GM12878 (cell line): ENCODE measurements at regions of chr11 and their contacts with region 1.

Region 1: GRCh38 chr11:33065445-33066178 is 26.2 kb downstream of the TCP11L1 start:
- DNase-seq: no peak
- ATAC-seq: peak; percentile 84
- H3K4me3 ChIP-seq: no peak overlapping the region
- H3K27ac ChIP-seq: no peak overlapping the region
- H3K4me1 ChIP-seq: peaks cover 40% of the 10 kb centered on the region
- H3K27me3 ChIP-seq: no peaks in the 10 kb centered on the region
- CTCF ChIP-seq: peak; percentile 88 to 94 (median 91); a peak in 5 of 6 replicates
- EP300 ChIP-seq: no peak
- POLR2A ChIP-seq: no peak
- RAD21 ChIP-seq: peak; percentile 87

Region 2: GRCh38 chr11:32809313-32809712 is 256.3 kb before region 1 on chr11:
- CTCF ChIA-PET with region 1: interaction called, 54 read pairs
- POLR2A ChIA-PET with region 1: no interaction called
- RAD21 ChIA-PET with region 1: interaction called, 36 read pairs
- SMC1A ChIA-PET with region 1: interaction called, 49 read pairs
- in situ Hi-C with region 1: loop called (anchors 10 kb)
- intact Hi-C with region 1: loop called (anchors 2 kb)
- DNase-seq: no peak
- ATAC-seq: peak; percentile 100
- H3K4me3 ChIP-seq: no peak overlapping the region
- H3K27ac ChIP-seq: no peak overlapping the region
- H3K4me1 ChIP-seq: no peaks in the 10 kb centered on the region
- H3K27me3 ChIP-seq: no peaks in the 10 kb centered on the region
- CTCF ChIP-seq: peak; percentile 85 to 86 (median 86)
- EP300 ChIP-seq: no peak
- POLR2A ChIP-seq: no peak
- RAD21 ChIP-seq: peak; percentile 83

Region 3: GRCh38 chr11:32947978-32948377 is 117.6 kb before region 1 on chr11:
- CTCF ChIA-PET with region 1: interaction called, 10 read pairs
- POLR2A ChIA-PET with region 1: no interaction called
- RAD21 ChIA-PET with region 1: no interaction called
- SMC1A ChIA-PET with region 1: interaction called, 141 read pairs
- in situ Hi-C with region 1: no loop called
- intact Hi-C with region 1: no loop called
- DNase-seq: no peak
- ATAC-seq: peak; percentile 31; the same call in 1 of the 3 replicates
- H3K4me3 ChIP-seq: no peak overlapping the region
- H3K27ac ChIP-seq: no peak overlapping the region
- H3K4me1 ChIP-seq: no peaks in the 10 kb centered on the region
- H3K27me3 ChIP-seq: no peaks in the 10 kb centered on the region
- CTCF ChIP-seq: no peak
- EP300 ChIP-seq: no peak
- POLR2A ChIP-seq: no peak
- RAD21 ChIP-seq: no peak

Region 4: GRCh38 chr11:32983506-32983905 is 82.1 kb before region 1 on chr11:
- CTCF ChIA-PET with region 1: interaction called, 13 read pairs
- POLR2A ChIA-PET with region 1: no interaction called
- RAD21 ChIA-PET with region 1: interaction called, 10 read pairs
- SMC1A ChIA-PET with region 1: interaction called, 20 read pairs
- in situ Hi-C with region 1: no loop called
- intact Hi-C with region 1: no loop called
- DNase-seq: no peak
- ATAC-seq: no peak
- H3K4me3 ChIP-seq: no peak overlapping the region
- H3K27ac ChIP-seq: no peak overlapping the region
- H3K4me1 ChIP-seq: no peaks in the 10 kb centered on the region
- H3K27me3 ChIP-seq: no peaks in the 10 kb centered on the region
- CTCF ChIP-seq: no peak
- EP300 ChIP-seq: no peak
- POLR2A ChIP-seq: no peak
- RAD21 ChIP-seq: no peak

Region 5: GRCh38 chr11:33039274-33040032 is 26.2 kb before region 1 on chr11 and contains the start of gene TCP11L1:
- CTCF ChIA-PET with region 1: interaction called, 20 read pairs
- POLR2A ChIA-PET with region 1: interaction called, 7 read pairs
- RAD21 ChIA-PET with region 1: interaction called, 53 read pairs
- SMC1A ChIA-PET with region 1: interaction called, 34 read pairs
- in situ Hi-C with region 1: no loop called
- intact Hi-C with region 1: loop called (anchors 1 kb)
- DNase-seq: peak; percentile 59
- ATAC-seq: peak; percentile 87
- H3K4me3 ChIP-seq: peak within 1 kb of the TSS; percentile 85
- H3K27ac ChIP-seq: peak within 1 kb of the TSS; percentile 98
- H3K4me1 ChIP-seq: no peaks in the 10 kb centered on the region
- H3K27me3 ChIP-seq: no peaks in the 10 kb centered on the region; a peak in 1 of 4 replicates
- CTCF ChIP-seq: no peak; a peak in 1 of 6 replicates
- EP300 ChIP-seq: no peak
- POLR2A ChIP-seq: peak; percentile 84
- RAD21 ChIP-seq: no peak
- polyA plus RNA-seq, gene TCP11L1: 5.3 to 5.8 TPM

Region 6: DNA sequence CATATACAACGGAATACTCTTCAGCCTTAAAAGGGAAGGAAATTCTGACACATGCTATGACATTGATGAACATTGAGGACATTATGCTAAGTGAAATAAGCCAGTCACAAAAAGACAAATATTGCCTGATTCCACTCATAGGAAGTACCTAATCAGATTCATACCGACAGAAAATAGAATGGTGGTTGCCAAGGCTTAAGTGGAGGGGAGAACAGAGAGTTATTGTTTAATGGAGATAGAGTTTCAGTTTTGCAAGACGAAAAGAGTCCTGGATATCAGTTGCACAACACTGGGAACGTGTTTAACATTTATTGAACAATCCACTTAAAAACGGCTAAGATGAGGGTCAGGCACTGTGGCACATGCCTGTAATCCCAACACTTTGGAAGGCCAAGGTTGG is 146.0 kb after region 1 on chr11:
- CTCF ChIA-PET with region 1: no interaction called
- POLR2A ChIA-PET with region 1: no interaction called
- RAD21 ChIA-PET with region 1: no interaction called
- SMC1A ChIA-PET with region 1: no interaction called
- in situ Hi-C with region 1: no loop called
- intact Hi-C with region 1: no loop called
- DNase-seq: no peak
- ATAC-seq: no peak
- H3K4me3 ChIP-seq: no peak overlapping the region
- H3K27ac ChIP-seq: no peak overlapping the region
- H3K4me1 ChIP-seq: no peaks in the 10 kb centered on the region
- H3K27me3 ChIP-seq: no peaks in the 10 kb centered on the region
- CTCF ChIP-seq: no peak
- EP300 ChIP-seq: no peak
- POLR2A ChIP-seq: no peak
- RAD21 ChIP-seq: no peak

Region 7: DNA sequence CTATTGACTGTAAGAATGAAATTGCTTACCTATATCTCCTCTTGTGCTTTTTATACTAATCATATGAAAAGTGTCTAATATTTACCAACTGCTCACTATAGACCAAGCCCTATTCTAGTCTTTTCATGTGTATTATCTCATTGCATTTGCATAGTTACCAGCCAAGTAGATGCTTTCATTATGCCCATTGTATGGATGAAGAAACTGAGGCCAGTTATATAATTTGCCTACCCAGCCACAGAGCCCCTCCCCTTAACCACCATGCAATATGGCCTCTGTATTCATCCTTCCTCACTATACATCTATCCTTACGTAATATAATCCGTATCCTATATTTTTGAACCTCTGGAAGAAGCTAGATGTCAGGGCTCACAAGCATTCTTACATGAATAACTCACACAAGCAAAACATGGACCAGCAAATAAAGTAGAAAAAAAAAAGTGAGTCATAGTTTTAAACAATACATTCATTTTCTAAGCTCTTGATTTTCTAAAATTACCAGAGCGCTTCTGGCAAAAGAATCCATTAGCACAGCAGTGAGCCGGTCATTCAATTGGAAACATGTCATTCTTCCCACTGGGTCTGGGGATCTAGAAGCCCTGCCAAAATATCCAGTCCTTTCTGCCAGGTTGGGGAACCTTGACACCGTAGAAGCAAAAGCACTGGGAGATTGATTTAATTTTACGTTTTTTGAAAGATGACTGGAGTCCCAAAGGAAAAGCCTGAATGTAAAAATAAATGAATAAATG is 555.0 kb after region 1 on chr11:
- CTCF ChIA-PET with region 1: no interaction called
- POLR2A ChIA-PET with region 1: no interaction called
- RAD21 ChIA-PET with region 1: no interaction called
- SMC1A ChIA-PET with region 1: no interaction called
- in situ Hi-C with region 1: no loop called
- intact Hi-C with region 1: no loop called
- DNase-seq: no peak
- ATAC-seq: no peak
- H3K4me3 ChIP-seq: no peak overlapping the region
- H3K27ac ChIP-seq: no peak overlapping the region
- H3K4me1 ChIP-seq: peaks cover 12% of the 10 kb centered on the region
- H3K27me3 ChIP-seq: no peaks in the 10 kb centered on the region
- CTCF ChIP-seq: no peak
- EP300 ChIP-seq: no peak
- POLR2A ChIP-seq: no peak
- RAD21 ChIP-seq: no peak